ENCODE measurements at regions of chr6 and their contacts with region 1.

Region 1: GRCh38 chr6:46772762-46773161 is 20.4 kb upstream of the MEP1A start:
- DNase-seq: peak in 1 of 9 experiments; percentile 27
- ATAC-seq: no peak
- H3K4me3 ChIP-seq: no peak overlapping the region
- H3K4me3 Mint-ChIP-seq: no peak overlapping the region
- H3K27ac ChIP-seq: no peak overlapping the region
- H3K27ac Mint-ChIP-seq: no peak overlapping the region
- H3K4me1 ChIP-seq: no peaks in the 10 kb centered on the region
- H3K4me1 Mint-ChIP-seq: no peaks in the 10 kb centered on the region
- H3K27me3 ChIP-seq: no peaks in the 10 kb centered on the region
- H3K27me3 Mint-ChIP-seq: peaks cover 9% of the 10 kb centered on the region
- CTCF ChIP-seq: no peak

Region 2: DNA sequence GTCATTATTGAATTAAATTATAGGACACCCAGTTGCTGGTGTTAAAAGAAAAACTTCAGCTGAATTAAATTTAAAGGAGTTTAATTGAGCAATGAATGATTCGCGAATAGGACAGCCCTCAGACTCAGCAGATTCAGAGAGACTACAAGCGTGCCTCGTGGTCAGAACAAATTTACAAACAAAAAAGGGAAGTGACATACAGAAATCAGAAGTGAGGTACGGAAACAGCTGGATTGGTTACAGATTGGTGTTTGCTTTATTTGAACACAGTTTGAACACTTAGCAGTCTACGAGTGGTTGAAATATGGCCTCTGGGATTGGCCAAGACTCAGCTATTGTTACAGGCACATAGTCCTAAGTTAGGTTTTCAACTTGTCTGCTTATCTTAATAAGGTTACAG is 562.7 kb after region 1 on chr6:
- CTCF ChIA-PET with region 1: no interaction called
- POLR2A ChIA-PET with region 1: no interaction called
- intact Hi-C with region 1: loop called in 1 of 2 experiments (anchors 5 kb)
- DNase-seq: no peak
- ATAC-seq: no peak
- H3K4me3 ChIP-seq: no peak overlapping the region
- H3K4me3 Mint-ChIP-seq: no peak overlapping the region
- H3K27ac ChIP-seq: no peak overlapping the region
- H3K27ac Mint-ChIP-seq: no peak overlapping the region
- H3K4me1 ChIP-seq: no peaks in the 10 kb centered on the region
- H3K4me1 Mint-ChIP-seq: no peaks in the 10 kb centered on the region
- H3K27me3 ChIP-seq: no peaks in the 10 kb centered on the region
- H3K27me3 Mint-ChIP-seq: peaks cover 3% of the 10 kb centered on the region
- CTCF ChIP-seq: no peak